Dorsolateral prefrontal cortex (tissue), 120 donors: ENCODE measurements at regions of chr11 and their contacts with region 1.

Region 1: GRCh38 chr11:46392421-46393230 is 1.1 kb upstream of the CHRM4 start:
- DNase-seq: peak in 8 of 10 donors; percentile 25 to 84 (median 62)
- H3K4me3 ChIP-seq: peak overlapping the region; percentile 34 to 73 (median 57)
- H3K27ac ChIP-seq: peak overlapping the region in 38 of 59 donors; percentile 4 to 86 (median 39)
- H3K27me3 ChIP-seq: peaks cover 0 to 44% (median 15%) of the 10 kb centered on the region in 45 donors
- CTCF ChIP-seq: peak in 26 of 56 donors; percentile 12 to 55 (median 26)

Region 2: GRCh38 chr11:45872513-45873356 is 519.9 kb before region 1 on chr11:
- intact Hi-C with region 1: no loop called
- DNase-seq: peak; percentile 53 to 82 (median 74)
- H3K4me3 ChIP-seq: no peak overlapping the region
- H3K27ac ChIP-seq: peak overlapping the region in 55 of 59 donors; percentile 15 to 85 (median 66)
- H3K27me3 ChIP-seq: no peaks in the 10 kb centered on the region
- CTCF ChIP-seq: peak; percentile 23 to 92 (median 82)

Region 3: DNA sequence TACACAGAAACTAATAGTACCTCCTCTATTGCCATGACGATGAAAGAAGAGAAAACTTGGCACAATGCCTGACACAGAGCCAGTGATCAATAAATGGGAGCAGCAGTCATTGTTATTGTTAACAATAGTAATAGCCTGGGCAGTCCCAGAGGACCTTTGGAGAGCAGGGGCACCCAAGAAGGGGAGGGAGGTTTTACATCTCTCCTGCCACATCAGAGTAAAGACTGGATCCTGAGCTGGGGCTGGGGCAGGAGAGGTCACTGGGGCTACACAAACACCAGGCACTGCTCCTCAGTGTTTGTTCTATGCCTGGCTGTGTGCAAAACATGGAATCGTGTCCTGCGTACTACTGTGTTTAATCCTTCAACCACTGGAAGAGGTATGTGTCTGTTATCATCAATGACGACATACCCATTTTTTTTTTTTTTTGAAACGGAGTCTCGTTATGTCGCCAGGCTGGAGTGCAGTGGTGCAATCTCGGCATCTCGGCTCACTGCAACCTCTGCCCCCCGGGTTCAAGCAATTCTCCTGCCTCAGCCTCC is 140.2 kb before region 1 on chr11:
- intact Hi-C with region 1: no loop called
- DNase-seq: no peak
- H3K4me3 ChIP-seq: no peak overlapping the region
- H3K27ac ChIP-seq: no peak overlapping the region
- H3K27me3 ChIP-seq: no peaks in the 10 kb centered on the region
- CTCF ChIP-seq: no peak

Region 4: GRCh38 chr11:46352063-46352841 is 40.4 kb before region 1 on chr11:
- intact Hi-C with region 1: loop called in 1 of 2 experiments (anchors 5 kb)
- DNase-seq: peak in 3 of 10 donors; percentile 32 to 81 (median 72)
- H3K4me3 ChIP-seq: peak overlapping the region in 53 of 59 donors; percentile 2 to 90 (median 37)
- H3K27ac ChIP-seq: peak overlapping the region in 58 of 59 donors; percentile 24 to 91 (median 82)
- H3K27me3 ChIP-seq: no peaks in the 10 kb centered on the region
- CTCF ChIP-seq: peak; percentile 65 to 99 (median 94)

Region 5: DNA sequence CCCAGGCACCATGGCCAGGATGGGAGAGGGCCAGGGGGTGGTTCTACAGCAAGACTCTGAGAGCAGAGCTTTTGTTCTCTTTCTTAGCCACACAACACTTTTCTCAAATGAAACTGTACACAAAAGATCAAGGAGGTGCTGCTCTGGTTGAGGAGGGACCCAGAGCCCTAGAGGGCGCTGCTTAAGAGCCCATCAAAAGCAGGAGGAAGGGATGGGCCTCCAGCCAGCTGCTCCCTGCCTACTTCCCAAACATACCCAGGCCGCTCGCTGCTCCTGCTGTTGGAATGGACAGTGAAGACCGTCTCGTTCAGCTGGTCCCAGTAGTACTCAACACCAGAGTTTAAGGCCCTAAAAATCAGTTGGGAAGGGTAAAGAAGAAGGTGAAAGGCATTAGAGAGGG is 17.4 kb after region 1 on chr11:
- intact Hi-C with region 1: no loop called
- DNase-seq: peak in 1 of 10 donors; percentile 38
- H3K4me3 ChIP-seq: no peak overlapping the region
- H3K27ac ChIP-seq: peak overlapping the region in 2 of 59 donors; percentile 4 to 34
- H3K27me3 ChIP-seq: no peaks in the 10 kb centered on the region
- CTCF ChIP-seq: peak in 5 of 56 donors; percentile 9 to 20 (median 14)

Region 6: DNA sequence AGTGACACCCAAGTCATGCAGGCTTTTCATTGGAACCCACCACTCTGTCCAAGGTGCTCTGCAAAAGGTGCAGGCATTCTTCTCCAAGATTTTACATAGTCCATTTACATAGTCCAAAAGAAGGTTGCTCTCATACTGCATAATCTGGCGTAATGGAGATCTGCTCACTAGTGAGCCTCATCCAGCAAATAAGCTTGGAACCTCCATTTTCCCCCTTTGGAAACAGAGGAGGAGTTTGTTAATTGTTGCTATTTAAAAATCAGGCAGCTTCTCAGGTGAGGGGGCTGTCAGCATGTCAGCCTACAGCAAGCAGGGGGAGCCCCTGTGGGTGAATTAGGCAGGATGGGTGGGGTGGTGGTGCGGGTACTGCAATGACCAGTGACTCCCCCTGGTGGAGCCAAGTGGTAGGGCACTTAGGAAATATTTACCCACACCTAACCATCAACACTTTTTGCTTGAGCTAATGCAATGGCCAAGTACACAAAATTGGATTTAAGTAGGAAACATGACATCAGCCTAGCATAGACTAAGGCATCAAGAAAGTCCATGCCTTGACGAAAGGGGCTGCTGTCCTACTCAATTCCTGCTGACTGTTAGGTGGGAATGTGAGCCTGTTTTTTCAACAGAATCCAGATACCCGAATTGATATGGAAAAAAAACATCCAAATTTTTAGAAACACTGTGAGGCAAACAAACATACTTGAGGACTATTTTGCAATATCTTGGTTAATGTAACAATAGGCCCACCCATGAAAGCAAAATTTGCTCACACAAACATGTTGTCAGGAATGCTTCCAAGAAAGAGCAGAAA is 136.7 kb after region 1 on chr11:
- intact Hi-C with region 1: loop called in 1 of 2 experiments (anchors 5 kb)
- DNase-seq: peak in 7 of 10 donors; percentile 45 to 63 (median 52)
- H3K4me3 ChIP-seq: no peak overlapping the region
- H3K27ac ChIP-seq: peak overlapping the region in 12 of 59 donors; percentile 1 to 30 (median 20)
- H3K27me3 ChIP-seq: no peaks in the 10 kb centered on the region
- CTCF ChIP-seq: peak; percentile 71 to 94 (median 88)

Region 7: DNA sequence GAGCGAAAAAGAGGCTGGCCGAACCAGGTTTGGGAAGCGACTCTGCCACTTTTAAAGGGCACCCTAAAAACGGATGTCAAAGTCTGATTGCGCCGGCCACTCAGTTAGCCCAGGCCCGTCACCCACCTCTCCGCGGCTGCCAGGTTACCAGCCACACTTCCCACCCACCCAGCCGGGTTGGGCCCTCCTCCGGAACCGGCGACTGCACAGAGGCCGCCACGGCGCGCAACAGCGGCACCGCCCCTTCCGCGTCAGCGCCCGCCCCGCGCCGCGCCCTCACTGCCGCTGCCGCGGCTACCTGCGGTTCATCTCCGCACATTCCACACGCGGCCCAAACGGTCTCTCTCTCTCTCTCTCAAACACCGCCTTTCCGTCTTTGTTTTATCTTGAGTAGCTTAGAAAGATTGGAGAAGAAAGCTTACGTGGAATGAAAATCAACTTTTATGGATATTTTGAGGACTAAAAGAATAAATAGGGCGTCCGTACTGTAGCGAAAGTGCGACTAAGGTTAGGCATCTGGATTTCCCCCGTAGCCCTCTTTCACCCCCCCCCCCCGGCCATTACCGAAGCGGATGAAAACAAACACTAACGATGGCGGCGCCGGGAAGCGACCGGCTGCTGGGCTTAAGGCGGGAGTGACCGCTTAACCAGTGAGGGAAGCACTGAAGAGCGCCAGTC is 224.5 kb after region 1 on chr11 and contains the starts of genes ATG13 and HARBI1:
- intact Hi-C with region 1: loop called (anchors 10 kb)
- DNase-seq: peak; percentile 75 to 94 (median 88)
- H3K4me3 ChIP-seq: peak within 1 kb of the TSS; percentile 47 to 100 (median 99)
- H3K27ac ChIP-seq: peak within 1 kb of the TSS; percentile 79 to 99 (median 97)
- H3K27me3 ChIP-seq: no peaks in the 10 kb centered on the region
- CTCF ChIP-seq: peak in 5 of 56 donors; percentile 11 to 23 (median 12)
- total RNA-seq, gene ATG13: 107 to 201 (median 150) TPM
- total RNA-seq, gene HARBI1: 4.5 to 29.2 (median 8.0) TPM

Region 8: DNA sequence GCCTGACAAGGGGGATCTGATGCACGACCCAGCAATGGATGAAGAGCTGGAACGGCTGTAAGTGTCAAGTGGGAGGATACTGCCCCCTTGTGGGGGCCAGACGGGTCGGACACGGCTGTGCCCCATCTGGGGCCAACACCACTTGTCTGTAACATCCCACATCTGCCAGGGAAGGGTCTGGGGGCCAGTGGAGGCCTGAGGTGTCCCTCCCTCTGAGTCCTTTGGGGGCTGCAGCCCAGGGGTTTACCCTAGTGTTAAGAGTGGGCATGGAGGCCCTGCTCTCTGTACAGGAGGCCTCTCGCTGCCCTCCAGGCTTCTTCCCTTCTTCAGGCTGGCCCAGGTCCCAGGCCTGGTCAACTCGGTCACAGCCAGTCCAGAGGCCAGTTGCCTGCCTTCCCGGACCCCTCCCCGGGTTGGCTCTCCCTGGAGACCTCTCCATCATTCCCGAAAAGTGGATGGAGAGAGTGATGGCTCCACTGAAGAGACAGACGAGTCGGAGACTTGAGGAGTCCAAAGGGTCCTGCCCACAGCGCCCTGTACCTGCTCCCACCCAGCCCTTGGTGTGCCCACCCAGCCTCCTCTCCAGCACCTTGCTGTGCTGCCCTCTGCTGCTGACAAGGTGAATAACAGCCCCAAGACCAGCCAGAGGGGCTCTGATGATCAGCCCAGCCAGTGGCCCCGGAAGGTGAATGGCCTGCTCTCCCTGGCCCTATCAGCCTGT is 768.7 kb after region 1 on chr11:
- intact Hi-C with region 1: loop called in 1 of 2 experiments (anchors 10 kb)
- DNase-seq: peak in 8 of 10 donors; percentile 55 to 77 (median 68)
- H3K4me3 ChIP-seq: no peak overlapping the region
- H3K27ac ChIP-seq: peak overlapping the region in 49 of 59 donors; percentile 5 to 89 (median 53)
- H3K27me3 ChIP-seq: no peaks in the 10 kb centered on the region
- CTCF ChIP-seq: peak; percentile 45 to 79 (median 69)